Naive thymus-derived CD4-positive, alpha-beta T cell (primary cell): ENCODE measurements at regions of chrX and their contacts with region 1.

Region 1: GRCh38 chrX:70196961-70197805 is 19.9 kb downstream of the DGAT2L6 start:
- DNase-seq: peak; percentile 18 to 70 (median 52)
- ATAC-seq: peak; percentile 83
- H3K4me3 ChIP-seq: no peak overlapping the region
- H3K4me3 Mint-ChIP-seq: peak overlapping the region in 3 of 10 donors; percentile 1 to 38 (median 4)
- H3K27ac ChIP-seq: no peak overlapping the region
- H3K27ac Mint-ChIP-seq: no peak overlapping the region
- H3K4me1 ChIP-seq: no peaks in the 10 kb centered on the region
- H3K4me1 Mint-ChIP-seq: peaks cover 0 to 6% (median 4%) of the 10 kb centered on the region in 7 donors
- H3K27me3 ChIP-seq: no peaks in the 10 kb centered on the region
- H3K27me3 Mint-ChIP-seq: peaks cover 0 to 14% (median 0%) of the 10 kb centered on the region in 5 donors

Region 2: GRCh38 chrX:70066646-70067045 is 130.5 kb before region 1 on chrX:
- CTCF ChIA-PET with region 1: no interaction called
- POLR2A ChIA-PET with region 1: no interaction called
- intact Hi-C with region 1: no loop called
- DNase-seq: no peak
- ATAC-seq: no peak
- H3K4me3 ChIP-seq: no peak overlapping the region
- H3K4me3 Mint-ChIP-seq: no peak overlapping the region
- H3K27ac ChIP-seq: no peak overlapping the region
- H3K27ac Mint-ChIP-seq: no peak overlapping the region
- H3K4me1 ChIP-seq: no peaks in the 10 kb centered on the region
- H3K4me1 Mint-ChIP-seq: peaks cover 0 to 3% (median 0%) of the 10 kb centered on the region in 7 donors
- H3K27me3 ChIP-seq: no peaks in the 10 kb centered on the region
- H3K27me3 Mint-ChIP-seq: no peaks in the 10 kb centered on the region

Region 3: DNA sequence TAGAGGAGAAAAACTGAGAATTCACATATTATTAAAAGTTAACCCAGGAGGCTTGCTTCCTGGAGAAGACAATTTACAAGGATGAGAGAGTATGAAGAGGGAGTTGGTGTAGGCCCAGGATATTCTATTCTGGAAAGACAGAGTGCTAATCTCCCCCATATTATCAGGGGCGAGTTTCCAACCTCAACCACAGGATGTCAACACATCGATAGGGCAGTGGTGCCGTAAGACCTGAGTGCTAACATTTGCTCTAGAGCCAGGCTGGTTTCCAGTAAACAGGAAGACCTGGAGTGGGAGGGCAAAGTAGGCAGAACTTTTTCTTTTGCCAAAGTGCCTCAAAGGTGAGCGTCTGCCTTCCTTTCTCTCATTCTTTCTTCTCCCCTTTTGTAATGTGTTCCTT is 34.5 kb after region 1 on chrX:
- CTCF ChIA-PET with region 1: no interaction called
- POLR2A ChIA-PET with region 1: no interaction called
- intact Hi-C with region 1: loop called in 1 of 2 experiments (anchors 1 kb)
- DNase-seq: no peak
- ATAC-seq: no peak
- H3K4me3 ChIP-seq: no peak overlapping the region
- H3K4me3 Mint-ChIP-seq: no peak overlapping the region
- H3K27ac ChIP-seq: no peak overlapping the region
- H3K27ac Mint-ChIP-seq: no peak overlapping the region
- H3K4me1 ChIP-seq: no peaks in the 10 kb centered on the region
- H3K4me1 Mint-ChIP-seq: peaks cover 0 to 5% (median 0%) of the 10 kb centered on the region in 7 donors
- H3K27me3 ChIP-seq: no peaks in the 10 kb centered on the region
- H3K27me3 Mint-ChIP-seq: no peaks in the 10 kb centered on the region

Region 4: GRCh38 chrX:70262952-70263567 is 65.9 kb after region 1 on chrX:
- CTCF ChIA-PET with region 1: no interaction called
- POLR2A ChIA-PET with region 1: no interaction called
- intact Hi-C with region 1: loop called in 1 of 2 experiments (anchors 2 kb)
- DNase-seq: peak in 5 of 9 donors; percentile 2 to 23 (median 4)
- ATAC-seq: no peak
- H3K4me3 ChIP-seq: no peak overlapping the region
- H3K4me3 Mint-ChIP-seq: no peak overlapping the region
- H3K27ac ChIP-seq: no peak overlapping the region
- H3K27ac Mint-ChIP-seq: no peak overlapping the region
- H3K4me1 ChIP-seq: no peaks in the 10 kb centered on the region
- H3K4me1 Mint-ChIP-seq: peaks cover 0 to 2% (median 0%) of the 10 kb centered on the region in 7 donors
- H3K27me3 ChIP-seq: no peaks in the 10 kb centered on the region
- H3K27me3 Mint-ChIP-seq: no peaks in the 10 kb centered on the region

Region 5: GRCh38 chrX:70554081-70554480 is 356.9 kb after region 1 on chrX:
- CTCF ChIA-PET with region 1: no interaction called
- POLR2A ChIA-PET with region 1: no interaction called
- intact Hi-C with region 1: loop called in 1 of 2 experiments (anchors 5 kb)
- DNase-seq: no peak
- ATAC-seq: no peak
- H3K4me3 ChIP-seq: no peak overlapping the region
- H3K4me3 Mint-ChIP-seq: no peak overlapping the region
- H3K27ac ChIP-seq: no peak overlapping the region
- H3K27ac Mint-ChIP-seq: no peak overlapping the region
- H3K4me1 ChIP-seq: no peaks in the 10 kb centered on the region
- H3K4me1 Mint-ChIP-seq: peaks cover 0 to 9% (median 0%) of the 10 kb centered on the region in 7 donors
- H3K27me3 ChIP-seq: no peaks in the 10 kb centered on the region
- H3K27me3 Mint-ChIP-seq: peaks cover 0 to 4% (median 0%) of the 10 kb centered on the region in 5 donors

Region 6: DNA sequence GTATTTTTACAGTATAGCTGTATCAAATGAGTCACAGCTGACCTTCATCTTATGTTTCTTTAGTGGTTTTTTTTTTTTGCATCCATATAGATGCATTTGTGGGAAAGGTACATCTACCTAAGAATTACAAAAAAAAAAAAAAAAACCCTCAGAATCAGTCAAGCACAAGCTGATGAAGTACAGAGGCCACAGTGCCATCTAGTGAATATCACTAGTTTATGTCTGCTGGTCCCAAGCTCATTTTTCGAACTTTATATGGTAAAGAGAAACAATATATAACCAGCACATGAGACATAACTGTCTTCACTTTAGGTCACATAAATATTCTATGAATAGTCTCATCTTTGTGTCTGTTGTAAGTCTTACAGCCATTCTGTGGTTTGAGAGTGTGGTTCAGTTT is 467.5 kb after region 1 on chrX:
- CTCF ChIA-PET with region 1: no interaction called
- POLR2A ChIA-PET with region 1: no interaction called
- intact Hi-C with region 1: loop called (anchors 2 to 10 kb)
- DNase-seq: peak in 3 of 9 donors; percentile 1 to 11 (median 1)
- ATAC-seq: no peak
- H3K4me3 ChIP-seq: no peak overlapping the region
- H3K4me3 Mint-ChIP-seq: no peak overlapping the region
- H3K27ac ChIP-seq: no peak overlapping the region
- H3K27ac Mint-ChIP-seq: no peak overlapping the region
- H3K4me1 ChIP-seq: no peaks in the 10 kb centered on the region
- H3K4me1 Mint-ChIP-seq: no peaks in the 10 kb centered on the region
- H3K27me3 ChIP-seq: no peaks in the 10 kb centered on the region
- H3K27me3 Mint-ChIP-seq: peaks cover 0 to 11% (median 0%) of the 10 kb centered on the region in 5 donors

Region 7: DNA sequence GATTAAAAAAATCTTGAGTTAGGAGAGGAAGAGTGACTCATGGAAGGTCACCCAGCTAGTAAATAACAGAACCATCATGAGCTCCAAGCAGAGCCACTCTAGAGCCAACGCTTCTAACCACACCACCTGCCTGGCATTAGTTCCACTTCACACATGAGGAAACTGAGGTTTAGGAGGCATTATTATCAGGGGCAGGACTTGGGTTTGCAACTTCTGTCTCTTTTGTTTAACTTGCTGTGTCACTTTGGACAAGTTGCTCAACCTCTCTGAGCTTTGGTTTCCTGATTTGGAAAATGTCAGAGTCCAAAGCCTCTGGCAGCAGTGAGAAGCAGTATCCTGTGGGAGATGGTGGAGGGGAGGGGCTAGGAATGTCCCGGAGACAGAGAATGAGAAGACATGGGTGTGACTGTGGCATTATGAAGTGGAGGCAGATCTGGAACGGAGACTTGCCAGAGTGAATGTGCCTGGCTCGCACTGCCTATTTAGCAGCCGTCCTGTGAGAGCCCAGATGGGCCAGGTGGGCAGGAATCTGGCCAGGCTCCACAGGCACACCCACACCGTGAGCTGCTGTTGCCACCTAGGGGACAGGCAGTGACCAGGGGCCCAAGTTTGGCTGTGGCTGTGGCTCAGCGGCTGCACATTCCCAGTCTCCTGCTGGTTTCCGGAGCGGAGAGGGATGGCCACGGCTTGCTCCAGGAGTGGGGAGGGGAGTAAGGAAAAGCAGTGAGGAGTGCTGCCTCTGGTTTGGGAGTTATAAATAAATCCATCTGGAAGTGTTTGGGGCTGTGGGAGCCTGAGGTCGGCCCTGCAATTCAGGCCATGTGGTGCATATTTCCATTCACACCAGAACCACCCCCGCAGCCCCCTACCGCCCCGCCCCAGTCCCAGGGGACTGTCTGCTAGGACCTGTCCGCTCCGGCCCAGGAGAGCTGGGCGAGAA is 1806.9 kb after region 1 on chrX:
- CTCF ChIA-PET with region 1: no interaction called
- POLR2A ChIA-PET with region 1: no interaction called
- intact Hi-C with region 1: no loop called
- DNase-seq: no peak
- ATAC-seq: no peak
- H3K4me3 ChIP-seq: no peak overlapping the region
- H3K4me3 Mint-ChIP-seq: no peak overlapping the region
- H3K27ac ChIP-seq: no peak overlapping the region
- H3K27ac Mint-ChIP-seq: no peak overlapping the region
- H3K4me1 ChIP-seq: no peaks in the 10 kb centered on the region
- H3K4me1 Mint-ChIP-seq: peaks cover 0 to 2% (median 0%) of the 10 kb centered on the region in 7 donors
- H3K27me3 ChIP-seq: no peaks in the 10 kb centered on the region
- H3K27me3 Mint-ChIP-seq: peaks cover 0 to 24% (median 0%) of the 10 kb centered on the region in 5 donors